ENCODE measurements at regions of chr3 and their contacts with region 1.

Region 1: DNA sequence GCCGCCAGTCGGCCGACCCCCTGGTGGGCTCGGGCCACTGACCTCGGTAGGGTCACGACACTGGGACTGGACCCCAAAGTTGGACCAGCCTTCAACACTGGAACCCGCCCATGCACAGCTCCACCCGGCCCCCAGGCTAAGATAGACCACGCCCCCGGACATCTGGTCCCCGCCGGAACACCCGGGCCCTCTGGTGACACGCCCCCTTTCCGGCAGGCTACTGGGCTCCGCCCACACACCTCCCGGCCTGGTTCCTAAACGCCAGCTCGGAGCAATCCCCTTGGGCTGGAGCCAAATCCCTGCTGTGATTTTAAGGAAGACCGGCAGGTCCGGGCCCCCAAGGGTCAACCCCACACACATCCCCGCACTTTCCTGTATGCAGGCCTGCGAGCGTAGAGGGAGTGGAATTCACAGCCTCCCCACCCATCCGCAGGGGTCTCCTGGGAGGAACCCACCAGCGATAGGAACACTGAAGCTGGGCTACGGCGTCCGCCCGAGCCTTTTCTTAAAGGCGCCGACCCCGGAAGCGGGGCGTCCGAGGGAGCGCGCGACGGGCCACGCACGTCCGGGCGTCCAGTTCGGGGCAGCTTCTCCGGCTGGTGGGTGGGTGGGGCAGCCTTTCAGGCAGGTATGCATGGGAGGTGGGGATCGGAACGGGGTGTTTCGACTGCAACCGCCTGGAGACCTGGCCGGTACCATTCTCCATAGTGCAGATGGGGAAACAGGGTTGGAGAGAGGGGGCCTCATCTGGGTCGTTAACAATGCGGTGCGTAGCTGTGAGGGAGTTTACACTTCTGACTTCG is at the start of gene HEMK1:
- DNase-seq: peak; percentile 92
- H3K4me3 Mint-ChIP-seq: peak within 1 kb of the TSS; percentile 97
- H3K27ac Mint-ChIP-seq: peak within 1 kb of the TSS; percentile 97
- H3K4me1 Mint-ChIP-seq: peaks cover 78% of the 10 kb centered on the region
- H3K27me3 Mint-ChIP-seq: no peaks in the 10 kb centered on the region
- total RNA-seq, gene HEMK1: 54.1 and 58.0 TPM in 2 replicates

Region 2: GRCh38 chr3:50337191-50337841 is 231.8 kb before region 1 on chr3:
- intact Hi-C with region 1: loop called (anchors 5 kb)
- DNase-seq: peak; percentile 96
- H3K4me3 Mint-ChIP-seq: peak overlapping the region; percentile 96
- H3K27ac Mint-ChIP-seq: peak overlapping the region; percentile 97
- H3K4me1 Mint-ChIP-seq: peaks cover 51% of the 10 kb centered on the region
- H3K27me3 Mint-ChIP-seq: no peaks in the 10 kb centered on the region

Region 3: DNA sequence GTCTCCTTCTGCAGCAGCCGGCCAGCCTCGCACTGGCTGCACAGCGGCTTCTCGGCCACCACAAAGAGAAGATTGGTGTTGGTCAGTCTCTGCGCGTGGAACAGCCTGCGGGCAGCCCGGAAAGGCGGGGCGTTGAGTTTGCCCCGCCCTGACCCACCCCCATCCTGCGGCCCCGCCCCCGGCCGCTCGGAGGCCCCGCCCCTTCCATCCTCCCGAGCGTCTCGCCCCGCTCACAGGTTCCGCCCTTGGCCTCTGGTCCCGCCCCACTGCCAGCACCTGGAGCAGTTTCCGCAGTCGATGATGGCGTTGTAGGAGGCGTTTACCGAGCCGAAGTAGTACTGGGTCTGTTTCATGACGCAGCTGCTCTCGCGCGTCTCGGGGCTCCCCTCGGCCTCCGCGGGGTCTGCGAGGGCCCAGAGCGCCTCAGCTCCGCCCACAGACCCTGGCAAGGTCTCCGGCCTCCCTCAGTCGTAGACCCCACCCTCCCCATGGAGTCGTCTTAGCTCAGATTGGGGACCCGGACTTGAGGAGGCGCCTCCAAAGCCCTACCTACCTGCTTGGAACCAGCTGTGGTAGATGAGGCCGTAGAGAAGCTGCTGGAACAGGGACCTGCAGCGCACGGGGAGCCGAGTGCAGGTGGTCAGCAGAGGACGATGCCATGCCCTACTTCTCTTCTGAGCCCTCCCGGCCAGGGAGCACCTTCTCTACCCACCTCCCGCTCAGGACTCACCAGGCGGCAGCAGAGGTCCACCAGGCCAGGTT is 203.9 kb before region 1 on chr3:
- intact Hi-C with region 1: loop called (anchors 1 kb)
- DNase-seq: peak; percentile 93
- H3K4me3 Mint-ChIP-seq: peak overlapping the region; percentile 79
- H3K27ac Mint-ChIP-seq: peak overlapping the region; percentile 70
- H3K4me1 Mint-ChIP-seq: peaks cover 13% of the 10 kb centered on the region
- H3K27me3 Mint-ChIP-seq: peaks cover 4% of the 10 kb centered on the region

Region 4: DNA sequence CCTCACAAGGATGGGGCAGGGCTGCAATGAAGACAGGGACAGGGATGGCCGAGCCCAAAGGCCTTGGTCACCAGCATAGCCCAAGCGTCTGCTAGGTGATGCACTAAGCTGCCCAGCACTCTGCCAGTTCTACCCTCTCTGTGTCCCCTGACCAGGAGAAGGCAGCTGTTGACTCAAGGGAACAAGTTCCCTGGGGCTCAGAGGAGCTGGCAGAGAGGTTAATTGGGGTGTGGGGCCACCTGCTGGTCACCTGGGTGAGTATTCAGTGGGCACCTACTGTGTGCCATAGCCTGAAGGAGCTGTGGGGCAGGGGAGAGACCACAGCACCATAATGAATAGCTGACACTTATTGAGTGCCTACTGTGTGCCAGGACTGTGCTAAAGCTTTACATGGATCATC is 83.6 kb after region 1 on chr3:
- intact Hi-C with region 1: loop called (anchors 1 kb)
- DNase-seq: no peak
- H3K4me3 Mint-ChIP-seq: no peak overlapping the region
- H3K27ac Mint-ChIP-seq: peak overlapping the region; percentile 75
- H3K4me1 Mint-ChIP-seq: peaks cover 23% of the 10 kb centered on the region
- H3K27me3 Mint-ChIP-seq: no peaks in the 10 kb centered on the region

Region 5: GRCh38 chr3:51371943-51372557 is 802.9 kb after region 1 on chr3:
- intact Hi-C with region 1: loop called (anchors 1 kb)
- DNase-seq: no peak
- H3K4me3 Mint-ChIP-seq: no peak overlapping the region
- H3K27ac Mint-ChIP-seq: no peak overlapping the region
- H3K4me1 Mint-ChIP-seq: no peaks in the 10 kb centered on the region
- H3K27me3 Mint-ChIP-seq: peaks cover 6% of the 10 kb centered on the region

Region 6: GRCh38 chr3:51498876-51499738 is 930.0 kb after region 1 on chr3:
- intact Hi-C with region 1: loop called (anchors 5 kb)
- DNase-seq: peak; percentile 85
- H3K4me3 Mint-ChIP-seq: peak overlapping the region; percentile 88
- H3K27ac Mint-ChIP-seq: peak overlapping the region; percentile 95
- H3K4me1 Mint-ChIP-seq: peaks cover 21% of the 10 kb centered on the region
- H3K27me3 Mint-ChIP-seq: peaks cover 3% of the 10 kb centered on the region

Measured in activated T-helper 1 cell treated with anti-CD3 and anti-CD28 coated beads, Interleukin-12 subunit alpha, Interleukin-12 subunit beta, Interleukin-2, Interleukin-4 antibody, amounts not matched to agents 30 ng/mL and 10 ng/mL and 1 ng/mL, durations not matched to agents 14 hours and 24 hours and 36 hours (primary cell).